Activated CD8-positive, alpha-beta T cell treated with anti-CD3 and anti-CD28 coated beads for 36 hours (primary cell): ENCODE measurements at regions of chr10 and their contacts with region 1.

Region 1: DNA sequence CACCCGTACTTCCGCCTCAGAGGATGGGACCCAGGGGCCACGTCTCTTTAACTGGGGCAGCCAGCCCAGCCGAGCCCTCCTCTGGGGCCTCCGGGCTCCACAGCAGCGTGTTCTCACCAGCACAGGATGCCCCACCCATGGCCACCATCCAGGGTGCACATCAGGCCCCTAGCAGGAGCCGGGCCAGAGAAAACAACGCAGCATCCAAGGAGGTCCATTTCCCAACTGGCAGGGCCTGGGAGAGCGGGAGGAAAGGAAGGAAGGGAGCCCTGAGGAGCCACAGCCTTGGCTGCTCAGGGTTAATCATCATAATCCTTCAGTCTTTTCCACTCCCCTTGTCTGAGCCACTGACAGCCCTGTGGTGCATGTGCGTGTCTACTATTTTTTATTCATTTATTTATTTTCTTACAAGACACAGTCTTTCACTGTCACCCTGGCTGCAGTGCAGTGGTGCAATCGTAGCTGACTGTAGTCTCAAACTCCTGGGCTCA is 3.6 kb downstream of the PLAC9 start:
- DNase-seq: no peak
- ATAC-seq: no peak
- H3K4me3 Mint-ChIP-seq: no peak overlapping the region
- H3K27ac Mint-ChIP-seq: no peak overlapping the region
- H3K4me1 Mint-ChIP-seq: peaks cover 2% of the 10 kb centered on the region
- H3K27me3 Mint-ChIP-seq: peaks cover 22% of the 10 kb centered on the region
- CTCF ChIP-seq: no peak

Region 2: DNA sequence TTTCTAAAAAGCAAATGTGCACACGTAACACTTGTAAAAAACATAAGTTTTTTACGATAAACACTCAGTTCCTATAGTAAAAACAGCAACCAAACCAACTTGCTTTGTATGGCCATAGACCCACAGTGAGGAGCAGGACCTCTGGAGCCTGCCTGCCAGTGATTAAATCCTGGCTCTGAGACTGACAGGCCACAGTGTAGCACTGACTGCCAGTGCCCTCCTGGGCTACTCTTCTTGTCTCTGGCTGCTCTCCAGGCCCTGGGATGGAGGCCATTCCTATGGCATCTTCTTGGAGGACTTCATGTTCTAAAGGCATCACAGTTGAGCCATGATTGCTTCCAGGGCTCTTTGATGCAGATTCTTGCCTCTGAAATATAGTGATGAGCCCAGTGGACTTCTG is 80.4 kb before region 1 on chr10:
- CTCF ChIA-PET with region 1: interaction called, 4 read pairs
- POLR2A ChIA-PET with region 1: no interaction called
- intact Hi-C with region 1: loop called (anchors 10 kb)
- DNase-seq: no peak
- ATAC-seq: no peak
- H3K4me3 Mint-ChIP-seq: no peak overlapping the region
- H3K27ac Mint-ChIP-seq: no peak overlapping the region
- H3K4me1 Mint-ChIP-seq: peaks cover 3% of the 10 kb centered on the region
- H3K27me3 Mint-ChIP-seq: no peaks in the 10 kb centered on the region
- CTCF ChIP-seq: no peak